HEK293 (cell line): ENCODE measurements at regions of chr1 and their contacts with region 1.

Region 1: DNA sequence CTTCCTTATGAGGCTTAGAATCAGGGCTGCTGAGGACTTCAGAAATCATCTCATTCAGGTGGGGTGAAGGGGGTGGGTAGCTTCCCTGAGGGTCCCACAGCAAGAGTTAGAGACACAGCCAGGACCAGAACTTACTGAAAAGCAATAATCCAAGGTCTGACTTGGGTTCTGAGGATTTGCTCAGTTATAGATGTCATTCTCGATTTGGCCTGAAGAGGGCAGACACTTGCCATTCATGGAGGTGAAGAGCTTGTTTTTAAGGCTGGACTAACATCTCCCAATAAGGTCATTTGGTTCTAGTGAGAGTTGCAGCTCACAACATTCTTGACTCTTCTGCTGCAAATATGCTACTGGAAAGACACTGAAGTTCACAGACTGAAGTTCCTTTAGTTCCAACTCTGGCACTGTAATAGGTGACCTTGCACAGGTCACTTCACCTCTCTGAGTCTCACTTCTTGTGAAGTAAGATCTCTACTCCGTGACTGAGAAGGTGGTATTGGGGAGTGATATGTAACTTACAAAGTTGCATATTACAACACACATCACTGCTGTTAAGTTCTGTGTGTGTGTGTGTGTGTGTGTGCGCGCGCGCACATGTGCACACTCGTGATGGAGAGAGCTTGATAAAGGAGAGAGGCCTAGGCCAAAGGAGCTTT is 69.8 kb upstream of the DIRAS3 start:
- H3K4me3 ChIP-seq: no peak overlapping the region
- H3K27ac ChIP-seq: no peak overlapping the region
- H3K4me1 ChIP-seq: no peaks in the 10 kb centered on the region
- CTCF ChIP-seq: peak; percentile 65; the same call in 1 of the 2 replicates

Region 2: DNA sequence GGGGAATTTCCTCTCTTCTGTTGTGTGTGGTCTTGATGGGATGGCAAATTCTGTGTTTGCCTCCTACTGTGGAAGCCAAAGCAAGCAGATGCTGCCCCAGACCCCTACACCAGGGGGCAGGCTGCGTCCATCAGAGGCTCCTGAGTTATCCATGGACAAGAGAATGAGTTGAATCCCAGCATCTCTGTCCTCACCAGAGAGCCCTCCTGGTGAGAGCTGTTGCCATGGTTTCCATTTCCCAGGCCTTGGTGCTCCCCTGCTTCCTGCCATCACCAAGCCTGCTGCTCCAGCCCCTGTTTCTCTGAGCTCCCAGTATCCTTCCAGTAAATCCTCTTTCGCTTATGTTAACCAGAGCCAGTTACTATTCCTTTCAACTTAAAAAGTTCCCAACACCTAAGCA is 266.6 kb before region 1 on chr1:
- CTCF ChIA-PET with region 1: interaction called, 12 read pairs
- POLR2A ChIA-PET with region 1: no interaction called
- H3K4me3 ChIP-seq: no peak overlapping the region
- H3K27ac ChIP-seq: no peak overlapping the region
- H3K4me1 ChIP-seq: peaks cover 8% of the 10 kb centered on the region
- CTCF ChIP-seq: peak; percentile 86

Region 3: GRCh38 chr1:68141071-68142021 is 21.1 kb after region 1 on chr1:
- CTCF ChIA-PET with region 1: interaction called, 10 read pairs
- POLR2A ChIA-PET with region 1: no interaction called
- H3K4me3 ChIP-seq: no peak overlapping the region
- H3K27ac ChIP-seq: no peak overlapping the region
- H3K4me1 ChIP-seq: no peaks in the 10 kb centered on the region
- CTCF ChIP-seq: no peak

Region 4: DNA sequence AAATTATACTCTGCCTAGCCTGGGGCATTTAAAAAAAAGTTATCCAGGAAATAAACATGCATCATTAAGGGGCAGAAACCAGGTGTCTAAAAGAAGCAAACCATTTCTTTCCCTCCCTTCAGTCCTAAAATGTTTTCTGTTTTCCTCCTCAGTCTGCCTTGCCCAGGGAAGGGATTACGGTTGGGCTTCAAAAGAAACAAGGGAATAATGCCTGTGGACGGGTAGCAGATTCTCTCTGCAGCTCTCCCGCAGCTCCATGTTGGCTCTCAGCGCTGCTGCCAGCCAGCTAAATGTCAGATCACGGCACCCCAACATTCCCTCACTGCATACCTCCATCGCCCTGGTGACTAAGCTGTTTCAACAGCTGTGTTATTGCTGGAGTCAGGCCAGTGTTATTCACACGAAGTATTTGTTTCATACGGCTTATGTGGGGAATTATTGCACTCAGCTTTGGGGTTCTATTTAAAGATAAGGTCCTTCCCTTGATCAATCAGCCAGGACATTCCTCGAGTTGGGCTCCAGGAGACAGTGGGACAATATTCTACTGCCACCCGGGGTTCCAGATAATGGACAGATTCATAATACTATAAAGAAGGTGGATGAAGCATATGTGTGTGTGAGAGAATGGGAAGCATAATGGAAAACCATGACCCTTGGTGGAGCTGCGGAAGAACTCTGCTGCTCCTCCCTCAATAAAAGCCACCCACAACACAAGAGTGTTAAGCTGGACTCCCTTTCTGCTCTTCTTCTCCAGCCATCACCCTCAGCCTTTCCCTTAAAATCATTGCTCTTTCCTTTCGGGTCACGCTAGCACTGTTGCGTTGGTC is 53.9 kb after region 1 on chr1:
- CTCF ChIA-PET with region 1: interaction called, 10 read pairs
- POLR2A ChIA-PET with region 1: no interaction called
- H3K4me3 ChIP-seq: no peak overlapping the region
- H3K27ac ChIP-seq: peak overlapping the region; percentile 46
- H3K4me1 ChIP-seq: peaks cover 34% of the 10 kb centered on the region
- CTCF ChIP-seq: no peak

Region 5: GRCh38 chr1:68321084-68321685 is 200.9 kb after region 1 on chr1:
- CTCF ChIA-PET with region 1: interaction called, 16 read pairs
- POLR2A ChIA-PET with region 1: no interaction called
- H3K4me3 ChIP-seq: no peak overlapping the region
- H3K27ac ChIP-seq: no peak overlapping the region
- H3K4me1 ChIP-seq: no peaks in the 10 kb centered on the region
- CTCF ChIP-seq: peak; percentile 40; the same call in 1 of the 2 replicates

Region 6: GRCh38 chr1:68352202-68352601 is 231.9 kb after region 1 on chr1:
- CTCF ChIA-PET with region 1: interaction called, 292 read pairs
- POLR2A ChIA-PET with region 1: no interaction called
- H3K4me3 ChIP-seq: no peak overlapping the region
- H3K27ac ChIP-seq: no peak overlapping the region
- H3K4me1 ChIP-seq: peaks cover 7% of the 10 kb centered on the region; the same call in 1 of the 2 replicates
- CTCF ChIP-seq: no peak